A673 (cell line): ENCODE measurements at regions of chr7 and their contacts with region 1.

Region 1: GRCh38 chr7:24290004-24290641 is 6.1 kb downstream of the NPY start:
- DNase-seq: peak; percentile 78
- H3K4me3 ChIP-seq: no peak overlapping the region
- H3K27ac ChIP-seq: no peak overlapping the region
- H3K4me1 ChIP-seq: peaks cover 19% of the 10 kb centered on the region
- H3K27me3 ChIP-seq: no peaks in the 10 kb centered on the region
- CTCF ChIP-seq: peak; percentile 63

Region 2: GRCh38 chr7:24349339-24349738 is 59.2 kb after region 1 on chr7:
- CTCF ChIA-PET with region 1: no interaction called
- POLR2A ChIA-PET with region 1: no interaction called
- intact Hi-C with region 1: no loop called
- DNase-seq: no peak
- H3K4me3 ChIP-seq: no peak overlapping the region
- H3K27ac ChIP-seq: no peak overlapping the region
- H3K4me1 ChIP-seq: no peaks in the 10 kb centered on the region
- H3K27me3 ChIP-seq: no peaks in the 10 kb centered on the region
- CTCF ChIP-seq: no peak

Region 3: DNA sequence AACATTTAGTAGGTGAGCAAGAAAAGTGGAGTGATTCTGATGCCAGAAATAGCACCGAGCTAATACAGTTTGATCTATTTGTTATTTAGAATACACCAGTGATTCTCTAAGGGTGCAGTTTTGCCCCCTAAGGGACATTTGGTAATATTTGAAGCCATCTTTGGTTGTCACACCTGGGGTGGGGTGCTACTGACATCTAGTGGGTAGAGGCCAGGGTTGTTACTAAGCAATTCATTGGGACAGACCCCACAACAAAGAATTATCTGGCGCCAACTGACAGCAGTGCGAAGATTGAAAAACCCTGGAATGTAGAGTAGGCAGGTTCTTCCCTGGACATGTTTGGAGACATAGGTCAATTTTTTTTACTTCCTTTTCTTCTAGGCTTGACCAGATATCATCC is 297.7 kb after region 1 on chr7:
- CTCF ChIA-PET with region 1: no interaction called
- POLR2A ChIA-PET with region 1: no interaction called
- intact Hi-C with region 1: loop called (anchors 5 kb)
- DNase-seq: peak; percentile 62
- H3K4me3 ChIP-seq: no peak overlapping the region
- H3K27ac ChIP-seq: no peak overlapping the region
- H3K4me1 ChIP-seq: peaks cover 10% of the 10 kb centered on the region
- H3K27me3 ChIP-seq: no peaks in the 10 kb centered on the region
- CTCF ChIP-seq: peak; percentile 64

Region 4: DNA sequence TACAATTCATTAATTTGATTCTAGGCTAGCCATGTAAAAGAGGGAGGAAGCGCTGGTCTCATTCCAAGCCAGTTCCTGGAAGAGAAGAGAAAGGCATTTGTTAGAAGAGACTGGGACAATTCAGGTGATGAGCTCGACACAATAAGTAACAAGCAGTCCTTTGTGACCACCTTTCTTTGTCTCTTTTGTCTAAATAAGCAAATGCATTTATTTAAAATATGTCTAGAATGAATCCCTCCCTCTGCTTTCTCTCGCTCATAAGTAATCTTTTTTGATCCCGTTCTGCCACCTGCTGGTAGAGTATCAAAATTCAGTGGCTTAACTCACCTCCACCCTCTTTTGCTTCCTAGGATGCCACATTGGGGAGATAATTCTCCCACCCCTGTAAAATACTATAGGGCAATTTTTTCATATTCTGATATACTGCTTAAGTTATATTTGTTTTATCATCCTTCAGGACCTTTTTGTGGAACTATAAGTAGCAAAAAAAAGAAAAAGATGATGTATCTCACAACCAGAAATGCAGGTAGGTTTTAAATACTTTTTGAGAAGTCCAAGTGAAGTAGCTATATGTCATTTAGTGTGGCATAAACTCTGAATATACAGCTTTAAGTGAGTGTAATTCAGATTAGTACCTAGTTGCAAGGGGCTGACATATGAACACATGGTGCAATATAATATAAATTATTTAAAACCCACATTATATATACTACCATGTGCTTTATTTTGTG is 375.6 kb after region 1 on chr7:
- CTCF ChIA-PET with region 1: no interaction called
- POLR2A ChIA-PET with region 1: no interaction called
- intact Hi-C with region 1: loop called (anchors 5 kb)
- DNase-seq: peak; percentile 73
- H3K4me3 ChIP-seq: no peak overlapping the region
- H3K27ac ChIP-seq: no peak overlapping the region
- H3K4me1 ChIP-seq: peaks cover 30% of the 10 kb centered on the region
- H3K27me3 ChIP-seq: no peaks in the 10 kb centered on the region
- CTCF ChIP-seq: peak; percentile 74

Region 5: GRCh38 chr7:24715661-24716479 is 425.7 kb after region 1 on chr7:
- CTCF ChIA-PET with region 1: no interaction called
- POLR2A ChIA-PET with region 1: no interaction called
- intact Hi-C with region 1: loop called (anchors 10 kb)
- DNase-seq: peak; percentile 64
- H3K4me3 ChIP-seq: no peak overlapping the region
- H3K27ac ChIP-seq: no peak overlapping the region
- H3K4me1 ChIP-seq: no peaks in the 10 kb centered on the region
- H3K27me3 ChIP-seq: no peaks in the 10 kb centered on the region
- CTCF ChIP-seq: peak; percentile 73